CD4-positive, alpha-beta memory T cell (primary cell): ENCODE measurements at regions of chr17 and their contacts with region 1.

Region 1: GRCh38 chr17:75430159-75430974 is 24.9 kb upstream of the GRB2 start:
- DNase-seq: no peak
- H3K4me3 ChIP-seq: no peak overlapping the region
- H3K4me3 Mint-ChIP-seq: no peak overlapping the region
- H3K27ac ChIP-seq: no peak overlapping the region
- H3K27ac Mint-ChIP-seq: peak overlapping the region in 1 of 7 donors; percentile 47
- H3K4me1 ChIP-seq: peaks cover 15% of the 10 kb centered on the region
- H3K4me1 Mint-ChIP-seq: peaks cover 10 to 20% (median 15%) of the 10 kb centered on the region in 4 donors
- H3K27me3 ChIP-seq: no peaks in the 10 kb centered on the region
- H3K27me3 Mint-ChIP-seq: peaks cover 0 to 9% of the 10 kb centered on the region in 2 donors

Region 2: DNA sequence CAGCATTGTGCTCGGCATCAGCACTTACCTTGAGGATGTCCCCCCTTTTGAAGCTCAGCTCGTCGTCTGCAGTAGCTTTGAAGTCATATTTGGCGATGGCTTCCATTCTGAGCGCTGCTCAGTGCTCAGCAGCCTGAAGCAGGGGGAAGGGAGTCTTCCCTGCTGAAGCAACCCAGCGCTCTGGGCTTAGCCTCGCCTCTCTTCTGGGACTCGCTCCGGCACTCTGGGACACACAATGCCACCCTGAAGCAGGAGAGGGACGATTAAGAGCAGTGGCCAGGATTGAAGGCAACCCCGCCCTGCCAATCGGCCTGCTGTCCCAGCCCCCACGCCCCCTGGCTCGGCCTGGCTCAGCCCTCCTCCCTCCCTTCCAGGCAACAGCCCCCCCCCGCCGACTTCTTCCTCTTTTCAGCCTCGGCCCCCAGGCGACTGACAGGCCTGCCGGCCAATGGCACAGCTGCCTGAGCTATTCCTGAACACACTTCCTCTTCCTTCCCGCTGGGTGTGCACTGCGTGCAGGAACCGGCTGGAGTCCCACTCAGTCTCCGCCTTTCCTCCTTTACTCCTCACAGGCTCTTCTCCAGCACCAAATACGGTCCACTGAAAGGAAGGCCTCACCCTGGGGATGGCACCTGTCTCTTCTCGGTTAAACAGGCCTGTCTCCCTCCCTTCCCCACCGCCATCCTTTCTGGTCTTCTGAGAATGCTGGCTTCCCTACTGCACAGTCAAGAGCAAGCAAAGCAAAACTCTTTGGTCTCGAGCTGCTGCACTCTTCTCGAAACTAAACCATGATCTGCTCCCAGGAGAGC is 36.6 kb before region 1 on chr17:
- CTCF ChIA-PET with region 1: no interaction called
- POLR2A ChIA-PET with region 1: no interaction called
- intact Hi-C with region 1: no loop called
- DNase-seq: peak; percentile 66 to 86 (median 75)
- H3K4me3 ChIP-seq: peak overlapping the region; percentile 30 to 60
- H3K4me3 Mint-ChIP-seq: peak overlapping the region; percentile 90 to 97 (median 95)
- H3K27ac ChIP-seq: peak overlapping the region; percentile 66
- H3K27ac Mint-ChIP-seq: peak overlapping the region; percentile 71 to 96 (median 89)
- H3K4me1 ChIP-seq: peaks cover 78% of the 10 kb centered on the region
- H3K4me1 Mint-ChIP-seq: peaks cover 63 to 88% (median 72%) of the 10 kb centered on the region in 4 donors
- H3K27me3 ChIP-seq: no peaks in the 10 kb centered on the region
- H3K27me3 Mint-ChIP-seq: no peaks in the 10 kb centered on the region

Region 3: GRCh38 chr17:75456417-75457046 is 26.2 kb after region 1 on chr17 and contains the start of gene TMEM94:
- CTCF ChIA-PET with region 1: interaction called, 25 read pairs
- POLR2A ChIA-PET with region 1: interaction called, 5 read pairs
- intact Hi-C with region 1: loop called (anchors 1 kb)
- DNase-seq: peak; percentile 90 to 94 (median 92)
- H3K4me3 ChIP-seq: peak within 1 kb of the TSS; percentile 94 to 95
- H3K4me3 Mint-ChIP-seq: peak within 1 kb of the TSS; percentile 93 to 99 (median 95)
- H3K27ac ChIP-seq: peak within 1 kb of the TSS; percentile 67
- H3K27ac Mint-ChIP-seq: peak within 1 kb of the TSS; percentile 90 to 98 (median 96)
- H3K4me1 ChIP-seq: peaks cover 18% of the 10 kb centered on the region
- H3K4me1 Mint-ChIP-seq: peaks cover 20 to 35% (median 30%) of the 10 kb centered on the region in 4 donors
- H3K27me3 ChIP-seq: no peaks in the 10 kb centered on the region
- H3K27me3 Mint-ChIP-seq: no peaks in the 10 kb centered on the region
- total RNA-seq, gene TMEM94: 109 TPM

Region 4: DNA sequence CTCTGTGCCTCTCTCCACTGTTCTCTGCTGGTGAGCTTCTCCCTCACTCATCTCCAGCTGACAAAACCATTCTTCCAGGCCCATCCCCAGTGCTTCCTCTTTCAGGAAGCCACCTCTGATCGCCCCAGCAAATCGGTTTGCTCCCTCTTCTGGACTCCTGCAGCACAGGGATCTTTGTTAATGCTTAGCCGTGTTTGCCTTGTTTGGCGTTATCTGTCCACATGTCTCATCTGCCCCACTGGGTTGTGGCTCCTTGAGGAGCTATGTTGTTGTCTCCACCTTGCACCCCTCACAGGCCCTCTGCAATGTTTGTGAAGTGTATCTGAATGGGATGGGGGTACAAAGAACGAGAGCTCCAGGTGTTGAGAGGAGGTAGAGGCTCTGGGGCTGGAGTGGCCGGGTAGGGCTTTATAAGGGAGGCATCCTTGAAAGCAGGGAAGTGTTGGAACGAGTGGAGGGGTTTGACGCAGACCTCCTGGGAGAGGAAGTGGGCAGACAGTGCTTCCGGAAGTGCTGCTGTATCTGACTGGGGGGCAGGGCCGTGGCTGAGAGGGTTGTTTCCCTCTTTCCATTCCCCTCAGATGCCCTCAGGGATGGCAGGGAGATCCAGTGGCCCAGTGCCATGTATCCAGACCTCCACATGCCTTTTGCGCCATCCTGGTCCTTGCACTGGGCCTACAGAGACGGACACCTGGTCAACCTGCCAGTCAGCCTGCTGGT is 57.1 kb after region 1 on chr17:
- CTCF ChIA-PET with region 1: interaction called, 17 read pairs
- POLR2A ChIA-PET with region 1: no interaction called
- intact Hi-C with region 1: no loop called
- DNase-seq: peak; percentile 37 to 52 (median 47)
- H3K4me3 ChIP-seq: peak overlapping the region in 1 of 2 donors; percentile 38
- H3K4me3 Mint-ChIP-seq: peak overlapping the region; percentile 50 to 88 (median 73)
- H3K27ac ChIP-seq: peak overlapping the region; percentile 22
- H3K27ac Mint-ChIP-seq: peak overlapping the region; percentile 84 to 99 (median 94)
- H3K4me1 ChIP-seq: peaks cover 21% of the 10 kb centered on the region
- H3K4me1 Mint-ChIP-seq: peaks cover 17 to 30% (median 26%) of the 10 kb centered on the region in 4 donors
- H3K27me3 ChIP-seq: no peaks in the 10 kb centered on the region
- H3K27me3 Mint-ChIP-seq: no peaks in the 10 kb centered on the region

Region 5: GRCh38 chr17:75524953-75525719 is 94.8 kb after region 1 on chr17 and contains the start of gene LLGL2:
- CTCF ChIA-PET with region 1: interaction called, 20 read pairs
- POLR2A ChIA-PET with region 1: interaction called, 3 read pairs
- intact Hi-C with region 1: loop called (anchors 1 kb)
- DNase-seq: peak; percentile 84 to 91 (median 90)
- H3K4me3 ChIP-seq: peak within 1 kb of the TSS; percentile 36 to 74
- H3K4me3 Mint-ChIP-seq: peak within 1 kb of the TSS; percentile 82 to 87 (median 84)
- H3K27ac ChIP-seq: peak within 1 kb of the TSS; percentile 56
- H3K27ac Mint-ChIP-seq: peak within 1 kb of the TSS; percentile 52 to 75 (median 67)
- H3K4me1 ChIP-seq: peaks cover 24% of the 10 kb centered on the region
- H3K4me1 Mint-ChIP-seq: peaks cover 8 to 17% (median 12%) of the 10 kb centered on the region in 4 donors
- H3K27me3 ChIP-seq: no peaks in the 10 kb centered on the region
- H3K27me3 Mint-ChIP-seq: no peaks in the 10 kb centered on the region
- total RNA-seq, gene LLGL2: 40.1 to 43.6 TPM

Region 6: DNA sequence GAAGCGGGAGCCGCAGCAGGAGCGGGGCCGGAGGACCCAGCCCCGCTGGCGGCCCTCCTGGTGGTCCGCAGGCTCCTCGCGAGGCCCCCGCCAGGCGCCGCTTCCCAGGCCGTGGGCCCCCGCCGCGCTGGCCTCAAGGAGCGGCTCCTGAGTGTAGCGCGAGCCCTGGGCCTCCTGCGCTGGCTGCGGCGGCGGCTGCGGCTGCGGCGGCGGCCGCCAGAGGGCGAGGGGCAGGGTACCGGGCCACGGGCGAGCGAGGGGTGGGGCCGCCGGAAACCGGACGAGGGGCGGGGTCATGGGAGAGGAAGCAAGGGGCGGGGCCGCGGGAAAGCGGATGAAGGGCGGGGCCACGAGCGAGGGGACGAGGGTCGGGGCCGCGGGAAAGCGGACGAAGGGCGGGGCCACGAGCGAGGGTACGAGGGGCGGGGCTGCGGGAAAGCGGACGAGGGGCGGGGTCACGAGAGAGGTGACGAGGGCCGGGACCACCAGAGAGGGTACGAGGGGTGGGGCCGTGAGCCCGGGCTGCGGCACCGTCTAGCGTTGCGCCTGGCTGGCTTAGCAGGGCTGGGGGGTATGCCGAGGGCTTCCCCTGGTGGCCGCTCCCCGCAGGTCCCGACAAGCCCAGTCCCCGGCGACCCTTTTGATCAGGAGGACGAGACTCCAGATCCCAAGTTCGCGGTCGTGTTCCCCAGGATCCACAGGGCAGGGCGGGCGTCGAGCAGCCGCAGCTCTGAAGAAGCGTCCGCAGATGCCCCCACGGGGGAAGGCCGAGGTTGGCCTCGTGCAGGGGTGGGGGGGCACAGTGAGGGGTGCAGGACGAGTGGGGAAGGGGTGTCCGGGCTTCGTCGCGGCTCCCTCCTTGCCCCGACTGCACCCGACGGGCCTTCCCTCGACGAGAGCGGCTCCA is 158.9 kb after region 1 on chr17:
- CTCF ChIA-PET with region 1: interaction called, 23 read pairs
- POLR2A ChIA-PET with region 1: interaction called, 3 read pairs
- intact Hi-C with region 1: loop called (anchors 1 kb)
- DNase-seq: peak; percentile 85 to 93 (median 92)
- H3K4me3 ChIP-seq: peak overlapping the region in 1 of 2 donors; percentile 41
- H3K4me3 Mint-ChIP-seq: peak overlapping the region; percentile 68 to 83 (median 78)
- H3K27ac ChIP-seq: no peak overlapping the region
- H3K27ac Mint-ChIP-seq: peak overlapping the region in 5 of 7 donors; percentile 57 to 88 (median 86)
- H3K4me1 ChIP-seq: peaks cover 18% of the 10 kb centered on the region
- H3K4me1 Mint-ChIP-seq: peaks cover 0 to 6% (median 3%) of the 10 kb centered on the region in 4 donors
- H3K27me3 ChIP-seq: no peaks in the 10 kb centered on the region
- H3K27me3 Mint-ChIP-seq: peaks cover 0 to 4% of the 10 kb centered on the region in 2 donors